GM10248 (cell line): ENCODE measurements at regions of chr9 and their contacts with region 1.

Region 1: DNA sequence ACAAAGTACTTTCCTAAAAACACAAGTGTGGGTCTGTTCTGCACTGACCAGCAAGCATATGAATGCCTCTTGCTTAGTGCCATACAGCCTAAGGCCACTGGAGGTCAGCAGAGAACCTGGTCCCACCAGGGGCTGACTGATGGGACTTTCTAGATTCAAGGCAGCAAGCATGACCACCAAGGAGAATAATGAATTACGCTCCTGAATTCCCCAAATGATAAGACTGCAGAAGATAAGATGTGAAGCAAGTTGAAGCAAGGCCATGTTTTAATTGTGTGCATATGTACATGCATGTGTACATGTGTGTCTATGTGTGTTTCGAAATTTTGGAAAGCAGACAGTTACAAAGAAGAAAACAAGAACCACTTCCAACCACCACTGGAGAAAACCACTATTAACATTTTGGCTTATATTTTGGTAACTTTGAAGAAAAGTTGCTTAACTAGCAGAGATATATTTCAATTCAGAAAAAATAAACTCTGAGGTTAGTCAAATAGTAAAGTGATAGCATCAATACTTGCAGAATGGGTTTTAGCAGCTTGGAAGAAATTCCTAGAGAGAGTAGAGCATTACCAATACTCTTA is 70.5 kb downstream of the ERP44 start:
- DNase-seq: peak; percentile 66
- CTCF ChIP-seq: peak; percentile 94

Region 2: GRCh38 chr9:100011062-100011681 is 17.1 kb before region 1 on chr9:
- CTCF ChIA-PET with region 1: interaction called, 10 read pairs
- POLR2A ChIA-PET with region 1: no interaction called
- DNase-seq: peak; percentile 49
- CTCF ChIP-seq: peak; percentile 47

Region 3: GRCh38 chr9:100216178-100216787 is 188.0 kb after region 1 on chr9:
- CTCF ChIA-PET with region 1: interaction called, 23 read pairs
- POLR2A ChIA-PET with region 1: no interaction called
- DNase-seq: peak; percentile 55
- CTCF ChIP-seq: peak; percentile 82